Ascending aorta (tissue), 2 donors: ENCODE measurements at regions of chr9 and their contacts with region 1.

Region 1: GRCh38 chr9:77166193-77166592 is 11.1 kb upstream of the VPS13A start:
- DNase-seq: no peak
- H3K4me3 ChIP-seq: no peak overlapping the region
- H3K27ac ChIP-seq: no peak overlapping the region
- H3K4me1 ChIP-seq: no peaks in the 10 kb centered on the region
- H3K27me3 ChIP-seq: no peaks in the 10 kb centered on the region
- CTCF ChIP-seq: no peak

Region 2: DNA sequence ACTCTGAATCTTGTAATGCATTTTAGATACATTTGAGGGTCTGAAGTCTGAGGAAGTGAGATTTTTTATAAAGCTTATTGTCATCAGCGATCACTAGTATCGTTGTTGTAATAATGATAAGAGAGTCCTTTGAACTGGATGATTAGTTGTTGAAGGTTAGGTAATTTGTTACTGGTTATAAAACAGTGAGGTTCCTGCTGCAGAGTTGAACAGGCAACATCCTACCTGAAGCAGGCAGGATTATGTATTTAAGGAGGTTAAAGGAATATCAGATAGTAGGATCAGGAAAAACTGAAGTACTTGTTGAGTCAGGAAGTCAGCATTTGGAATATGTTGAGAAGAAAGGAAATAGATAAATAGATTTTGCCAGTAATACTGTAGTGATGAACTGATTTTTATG is 117.8 kb after region 1 on chr9:
- intact Hi-C with region 1: no loop called
- DNase-seq: no peak
- H3K4me3 ChIP-seq: no peak overlapping the region
- H3K27ac ChIP-seq: no peak overlapping the region
- H3K4me1 ChIP-seq: no peaks in the 10 kb centered on the region
- H3K27me3 ChIP-seq: no peaks in the 10 kb centered on the region
- CTCF ChIP-seq: no peak

Region 3: GRCh38 chr9:77456829-77457437 is 290.7 kb after region 1 on chr9:
- intact Hi-C with region 1: loop called (anchors 5 kb)
- DNase-seq: peak; percentile 25 to 92
- H3K4me3 ChIP-seq: no peak overlapping the region
- H3K27ac ChIP-seq: no peak overlapping the region
- H3K4me1 ChIP-seq: peaks cover 0 to 3% of the 10 kb centered on the region in 2 donors
- H3K27me3 ChIP-seq: no peaks in the 10 kb centered on the region
- CTCF ChIP-seq: peak; percentile 55 to 87 (median 87)